Endothelial cell of umbilical vein (primary cell): ENCODE measurements at regions of chr1 and their contacts with region 1.

Region 1: GRCh38 chr1:156728597-156729462 is at the start of gene ISG20L2:
- DNase-seq: peak; percentile 96
- H3K4me3 ChIP-seq: peak within 1 kb of the TSS; percentile 56 to 94 (median 79)
- H3K27ac ChIP-seq: peak within 1 kb of the TSS; percentile 83
- H3K4me1 ChIP-seq: peaks cover 32% of the 10 kb centered on the region
- H3K27me3 ChIP-seq: no peaks in the 10 kb centered on the region
- CTCF ChIP-seq: no peak
- POLR2A ChIP-seq: peak; percentile 75
- total RNA-seq, gene ISG20L2: 32.1 and 35.3 TPM in 2 replicates

Region 2: DNA sequence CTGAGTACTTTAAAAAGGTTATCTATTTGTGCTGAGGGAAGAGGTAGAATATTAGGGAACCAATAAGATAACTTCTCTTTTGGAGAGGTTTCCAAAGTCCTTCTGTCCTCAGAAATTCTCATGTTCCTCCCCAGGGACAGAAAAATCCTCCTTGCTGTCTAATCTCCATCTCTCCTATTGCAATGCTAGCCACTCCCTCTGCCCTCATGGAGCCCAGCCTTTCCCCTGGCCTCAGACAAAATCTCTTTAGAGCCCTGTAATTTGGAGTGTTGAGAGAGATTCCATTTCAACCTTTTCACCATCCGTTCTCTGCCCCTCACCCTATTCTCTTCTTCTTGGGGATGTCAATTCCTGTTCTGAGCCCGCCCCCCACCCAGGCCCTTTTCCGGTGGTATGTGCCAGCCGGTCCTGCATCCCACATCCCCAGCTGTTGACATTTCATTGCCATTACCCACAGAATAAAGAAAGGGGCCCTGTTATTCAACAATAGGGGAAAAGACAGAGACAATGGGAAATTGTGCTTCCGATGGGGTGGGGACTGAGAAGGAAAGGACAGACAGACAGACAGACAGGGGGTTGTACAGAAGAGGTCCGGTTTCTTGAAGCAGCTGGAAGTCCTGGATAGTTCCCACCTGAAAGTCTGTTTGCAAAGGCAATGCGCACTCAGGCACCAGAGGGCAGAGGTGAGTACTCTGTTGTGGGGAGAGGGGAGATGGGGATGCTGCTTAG is 109.8 kb before region 1 on chr1 and contains the start of gene HAPLN2:
- CTCF ChIA-PET with region 1: interaction called, 28 read pairs
- POLR2A ChIA-PET with region 1: no interaction called
- dilution Hi-C with region 1: no loop called
- intact Hi-C with region 1: no loop called
- DNase-seq: peak; percentile 20
- H3K4me3 ChIP-seq: no peak within 1 kb of the TSS
- H3K27ac ChIP-seq: no peak within 1 kb of the TSS
- H3K4me1 ChIP-seq: peaks cover 8% of the 10 kb centered on the region
- H3K27me3 ChIP-seq: peaks cover 32 to 43% of the 10 kb centered on the region in 2 experiments
- CTCF ChIP-seq: peak; percentile 23 to 56
- POLR2A ChIP-seq: no peak
- total RNA-seq, gene HAPLN2: not detected in 2 replicates

Region 3: GRCh38 chr1:156689035-156689952 is 39.5 kb before region 1 on chr1:
- CTCF ChIA-PET with region 1: interaction called, 546 read pairs
- POLR2A ChIA-PET with region 1: interaction called, 6 read pairs
- dilution Hi-C with region 1: no loop called
- intact Hi-C with region 1: loop called (anchors 1 kb)
- DNase-seq: peak; percentile 86
- H3K4me3 ChIP-seq: no peak overlapping the region
- H3K27ac ChIP-seq: no peak overlapping the region
- H3K4me1 ChIP-seq: no peaks in the 10 kb centered on the region
- H3K27me3 ChIP-seq: peaks cover 19 to 31% of the 10 kb centered on the region in 2 experiments
- CTCF ChIP-seq: peak; percentile 87 to 93
- POLR2A ChIP-seq: no peak

Region 4: DNA sequence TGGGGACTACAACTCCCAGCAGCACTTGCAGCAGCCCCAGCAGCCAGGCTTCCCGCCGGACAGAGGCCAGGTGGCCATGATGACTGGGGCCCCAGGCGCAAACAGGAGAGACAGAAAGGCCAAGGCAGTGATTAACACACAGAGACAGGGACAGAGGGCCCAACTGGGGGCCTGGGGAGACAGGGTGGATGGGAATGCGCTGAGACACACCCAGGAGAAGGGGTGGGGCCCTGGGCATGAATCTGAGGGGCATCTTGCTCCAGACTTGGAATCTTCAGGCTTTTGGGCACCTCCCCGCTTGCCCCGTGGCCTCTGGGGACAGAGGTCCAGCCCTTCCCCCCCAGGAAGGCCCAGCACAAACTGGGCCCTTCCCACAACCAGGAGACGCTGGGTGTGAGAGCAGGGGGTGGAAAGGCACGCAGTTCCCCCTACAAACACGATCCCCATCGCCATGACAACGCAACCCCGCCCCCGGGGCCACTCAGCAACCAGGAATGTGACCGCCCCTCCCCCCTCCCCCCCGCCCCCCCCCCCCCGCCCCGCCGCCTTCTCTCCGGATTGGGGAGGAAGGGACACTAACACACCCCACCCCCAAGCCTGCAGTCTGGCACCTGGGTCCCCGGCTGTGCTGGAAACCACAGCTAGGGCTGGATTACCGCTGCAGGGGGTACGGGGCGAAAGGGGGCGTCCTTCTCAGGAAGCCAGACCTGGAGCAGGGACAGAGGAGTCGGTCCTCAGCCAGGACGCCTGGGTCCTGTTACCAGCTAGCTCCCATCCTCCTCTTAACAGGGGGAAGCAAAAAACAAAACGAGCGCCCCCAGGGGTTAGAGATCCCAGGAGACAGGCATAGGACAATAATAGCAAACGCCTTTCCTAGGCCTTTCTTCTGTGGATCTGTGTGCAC is 18.1 kb after region 1 on chr1:
- CTCF ChIA-PET with region 1: interaction called, 52 read pairs
- POLR2A ChIA-PET with region 1: interaction called, 8 read pairs
- dilution Hi-C with region 1: no loop called
- intact Hi-C with region 1: loop called (anchors 1 kb)
- DNase-seq: peak; percentile 77
- H3K4me3 ChIP-seq: peak overlapping the region in 2 of 3 experiments; percentile 44 to 92
- H3K27ac ChIP-seq: peak overlapping the region; percentile 99
- H3K4me1 ChIP-seq: peaks cover 41% of the 10 kb centered on the region
- H3K27me3 ChIP-seq: no peaks in the 10 kb centered on the region
- CTCF ChIP-seq: peak in 1 of 2 donors; percentile 22
- POLR2A ChIP-seq: peak; percentile 66

Region 5: GRCh38 chr1:156781585-156782186 is 52.9 kb after region 1 on chr1:
- CTCF ChIA-PET with region 1: interaction called, 18 read pairs
- POLR2A ChIA-PET with region 1: no interaction called
- dilution Hi-C with region 1: no loop called
- intact Hi-C with region 1: no loop called
- DNase-seq: no peak
- H3K4me3 ChIP-seq: no peak overlapping the region
- H3K27ac ChIP-seq: no peak overlapping the region
- H3K4me1 ChIP-seq: peaks cover 11% of the 10 kb centered on the region
- H3K27me3 ChIP-seq: no peaks in the 10 kb centered on the region
- CTCF ChIP-seq: no peak
- POLR2A ChIP-seq: no peak

Region 6: GRCh38 chr1:156892190-156893047 is 163.6 kb after region 1 on chr1:
- CTCF ChIA-PET with region 1: interaction called, 123 read pairs
- POLR2A ChIA-PET with region 1: interaction called, 4 read pairs
- dilution Hi-C with region 1: no loop called
- intact Hi-C with region 1: loop called (anchors 1 kb)
- DNase-seq: peak; percentile 87
- H3K4me3 ChIP-seq: no peak overlapping the region
- H3K27ac ChIP-seq: peak overlapping the region; percentile 64
- H3K4me1 ChIP-seq: peaks cover 31% of the 10 kb centered on the region
- H3K27me3 ChIP-seq: no peaks in the 10 kb centered on the region
- CTCF ChIP-seq: peak; percentile 91 to 97
- POLR2A ChIP-seq: no peak